Activated naive CD4-positive, alpha-beta T cell treated with anti-CD3 and anti-CD28 coated beads, Interleukin-2, amount 10 ng/mL, durations not matched to agents 7 days and 5 days (primary cell): ENCODE measurements at regions of chr19 and their contacts with region 1.

Region 1: GRCh38 chr19:10424011-10424637 is 3.8 kb downstream of the PDE4A start:
- DNase-seq: peak; percentile 81
- H3K4me3 Mint-ChIP-seq: peak overlapping the region; percentile 71
- H3K27ac Mint-ChIP-seq: peak overlapping the region; percentile 73
- H3K4me1 Mint-ChIP-seq: peaks cover 88% of the 10 kb centered on the region
- H3K27me3 Mint-ChIP-seq: peaks cover 89% of the 10 kb centered on the region

Region 2: GRCh38 chr19:10095948-10096621 is 328.0 kb before region 1 on chr19:
- CTCF ChIA-PET with region 1: no interaction called
- DNase-seq: peak; percentile 89
- H3K4me3 Mint-ChIP-seq: peak overlapping the region; percentile 57
- H3K27ac Mint-ChIP-seq: peak overlapping the region; percentile 82
- H3K4me1 Mint-ChIP-seq: peaks cover 31% of the 10 kb centered on the region
- H3K27me3 Mint-ChIP-seq: peaks cover 5% of the 10 kb centered on the region

Region 3: GRCh38 chr19:10478903-10479384 is 54.8 kb after region 1 on chr19:
- CTCF ChIA-PET with region 1: interaction called, 10 read pairs
- DNase-seq: peak; percentile 92
- H3K4me3 Mint-ChIP-seq: peak overlapping the region; percentile 54
- H3K27ac Mint-ChIP-seq: no peak overlapping the region
- H3K4me1 Mint-ChIP-seq: peaks cover 20% of the 10 kb centered on the region
- H3K27me3 Mint-ChIP-seq: peaks cover 14% of the 10 kb centered on the region